Endothelial cell of umbilical vein (primary cell): ENCODE measurements at regions of chr1 and their contacts with region 1.

Region 1: GRCh38 chr1:37458528-37458927 is 15.9 kb upstream of the ZC3H12A start:
- DNase-seq: no peak
- H3K4me3 ChIP-seq: no peak overlapping the region
- H3K27ac ChIP-seq: no peak overlapping the region
- H3K4me1 ChIP-seq: peaks cover 4% of the 10 kb centered on the region
- H3K27me3 ChIP-seq: no peaks in the 10 kb centered on the region
- CTCF ChIP-seq: no peak
- POLR2A ChIP-seq: no peak

Region 2: GRCh38 chr1:37267111-37267813 is 191.3 kb before region 1 on chr1:
- CTCF ChIA-PET with region 1: no interaction called
- POLR2A ChIA-PET with region 1: no interaction called
- dilution Hi-C with region 1: no loop called
- intact Hi-C with region 1: no loop called
- DNase-seq: no peak
- H3K4me3 ChIP-seq: no peak overlapping the region
- H3K27ac ChIP-seq: no peak overlapping the region
- H3K4me1 ChIP-seq: no peaks in the 10 kb centered on the region
- H3K27me3 ChIP-seq: no peaks in the 10 kb centered on the region
- CTCF ChIP-seq: no peak
- POLR2A ChIP-seq: no peak

Region 3: DNA sequence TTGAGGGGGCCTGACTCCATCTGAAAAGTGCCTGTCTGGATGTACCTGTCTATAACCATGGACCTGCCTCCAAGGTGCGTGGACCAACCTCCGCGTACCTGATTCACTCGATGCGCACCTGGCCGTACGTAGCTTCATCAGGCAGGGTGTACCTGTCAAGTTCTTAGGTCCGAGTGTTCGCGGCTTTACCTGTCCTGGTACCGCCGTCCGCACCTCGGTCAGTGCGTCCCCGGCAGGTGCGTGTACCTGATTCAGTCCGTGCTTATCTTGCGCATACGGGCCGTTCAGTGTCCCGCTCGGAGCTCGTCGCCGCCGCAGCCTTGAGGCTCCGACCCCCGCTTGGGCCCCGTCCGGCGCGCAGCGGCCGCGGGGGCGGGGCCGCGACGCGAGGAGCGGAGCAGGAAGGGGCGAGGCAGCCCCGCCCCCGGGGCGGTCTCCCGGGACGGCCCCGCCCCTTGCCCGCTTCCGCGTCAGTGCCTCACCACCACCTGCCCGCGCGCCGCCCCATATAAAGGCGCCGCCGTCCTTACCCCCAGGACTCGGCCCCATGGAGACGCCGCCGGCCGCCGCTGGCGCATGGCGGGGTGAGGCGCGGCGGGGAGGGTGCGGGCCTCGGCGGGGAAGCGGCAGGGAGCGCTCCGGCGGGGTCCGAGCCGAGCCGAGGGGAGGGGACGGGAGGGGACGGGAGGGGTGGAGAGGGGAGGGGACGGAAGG is 15.7 kb after region 1 on chr1 and contains the start of gene ZC3H12A:
- CTCF ChIA-PET with region 1: interaction called, 30 read pairs
- POLR2A ChIA-PET with region 1: no interaction called
- dilution Hi-C with region 1: no loop called
- intact Hi-C with region 1: loop called (anchors 1 kb)
- DNase-seq: peak; percentile 84
- H3K4me3 ChIP-seq: peak within 1 kb of the TSS; percentile 47 to 69 (median 55)
- H3K27ac ChIP-seq: peak within 1 kb of the TSS; percentile 65
- H3K4me1 ChIP-seq: peaks cover 72% of the 10 kb centered on the region
- H3K27me3 ChIP-seq: no peaks in the 10 kb centered on the region
- CTCF ChIP-seq: no peak
- POLR2A ChIP-seq: peak; percentile 97
- total RNA-seq, gene ZC3H12A: 6.3 and 7.5 TPM in 2 replicates

Region 4: GRCh38 chr1:37479255-37480124 is 21.0 kb after region 1 on chr1:
- CTCF ChIA-PET with region 1: interaction called, 337 read pairs
- POLR2A ChIA-PET with region 1: no interaction called
- dilution Hi-C with region 1: no loop called
- intact Hi-C with region 1: no loop called
- DNase-seq: peak; percentile 76
- H3K4me3 ChIP-seq: peak overlapping the region in 2 of 3 experiments; percentile 3 to 54
- H3K27ac ChIP-seq: peak overlapping the region; percentile 82
- H3K4me1 ChIP-seq: peaks cover 54% of the 10 kb centered on the region
- H3K27me3 ChIP-seq: no peaks in the 10 kb centered on the region
- CTCF ChIP-seq: no peak
- POLR2A ChIP-seq: no peak

Region 5: GRCh38 chr1:37553927-37554808 is 95.6 kb after region 1 on chr1 and contains the start of gene SNIP1:
- CTCF ChIA-PET with region 1: interaction called, 3 read pairs
- POLR2A ChIA-PET with region 1: no interaction called
- dilution Hi-C with region 1: no loop called
- intact Hi-C with region 1: loop called (anchors 5 kb)
- DNase-seq: peak; percentile 93
- H3K4me3 ChIP-seq: peak within 1 kb of the TSS; percentile 88 to 94 (median 88)
- H3K27ac ChIP-seq: peak within 1 kb of the TSS; percentile 76
- H3K4me1 ChIP-seq: peaks cover 14% of the 10 kb centered on the region
- H3K27me3 ChIP-seq: no peaks in the 10 kb centered on the region
- CTCF ChIP-seq: no peak
- POLR2A ChIP-seq: peak; percentile 56
- total RNA-seq, gene SNIP1: 18.4 and 19.6 TPM in 2 replicates

Region 6: GRCh38 chr1:37561133-37562132 is 102.9 kb after region 1 on chr1:
- CTCF ChIA-PET with region 1: interaction called, 3 read pairs
- POLR2A ChIA-PET with region 1: no interaction called
- dilution Hi-C with region 1: no loop called
- intact Hi-C with region 1: loop called (anchors 1 kb)
- DNase-seq: peak; percentile 15
- H3K4me3 ChIP-seq: no peak overlapping the region
- H3K27ac ChIP-seq: no peak overlapping the region
- H3K4me1 ChIP-seq: peaks cover 10% of the 10 kb centered on the region
- H3K27me3 ChIP-seq: no peaks in the 10 kb centered on the region
- CTCF ChIP-seq: peak; percentile 49 to 55
- POLR2A ChIP-seq: no peak

Region 7: GRCh38 chr1:37682334-37682987 is 223.9 kb after region 1 on chr1:
- CTCF ChIA-PET with region 1: interaction called, 10 read pairs
- POLR2A ChIA-PET with region 1: no interaction called
- dilution Hi-C with region 1: no loop called
- intact Hi-C with region 1: loop called (anchors 1 kb)
- DNase-seq: peak; percentile 61
- H3K4me3 ChIP-seq: no peak overlapping the region
- H3K27ac ChIP-seq: no peak overlapping the region
- H3K4me1 ChIP-seq: no peaks in the 10 kb centered on the region
- H3K27me3 ChIP-seq: no peaks in the 10 kb centered on the region
- CTCF ChIP-seq: peak; percentile 73 to 81
- POLR2A ChIP-seq: no peak